ENCODE measurements at regions of chr17 and their contacts with region 1.

Region 1: GRCh38 chr17:6120351-6120750 is 50.2 kb downstream of the WSCD1 start:
- DNase-seq: no peak
- H3K4me3 ChIP-seq: no peak overlapping the region
- H3K27ac ChIP-seq: no peak overlapping the region
- H3K4me1 ChIP-seq: no peaks in the 10 kb centered on the region
- H3K27me3 ChIP-seq: no peaks in the 10 kb centered on the region
- CTCF ChIP-seq: no peak

Region 2: GRCh38 chr17:6069539-6070429 is 50.6 kb before region 1 on chr17 and contains the start of gene WSCD1:
- CTCF ChIA-PET with region 1: no interaction called
- dilution Hi-C with region 1: loop called (anchors 5 kb)
- in situ Hi-C with region 1: no loop called
- intact Hi-C with region 1: no loop called
- DNase-seq: no peak
- H3K4me3 ChIP-seq: no peak within 1 kb of the TSS
- H3K27ac ChIP-seq: no peak within 1 kb of the TSS
- H3K4me1 ChIP-seq: no peaks in the 10 kb centered on the region
- H3K27me3 ChIP-seq: peaks cover 18% of the 10 kb centered on the region
- CTCF ChIP-seq: no peak
- total RNA-seq, gene WSCD1: not detected

Region 3: GRCh38 chr17:6191405-6192324 is 71.3 kb after region 1 on chr17:
- CTCF ChIA-PET with region 1: no interaction called
- dilution Hi-C with region 1: loop called (anchors 5 kb)
- in situ Hi-C with region 1: no loop called
- intact Hi-C with region 1: no loop called
- DNase-seq: no peak
- H3K4me3 ChIP-seq: no peak overlapping the region
- H3K27ac ChIP-seq: no peak overlapping the region
- H3K4me1 ChIP-seq: no peaks in the 10 kb centered on the region
- H3K27me3 ChIP-seq: no peaks in the 10 kb centered on the region
- CTCF ChIP-seq: no peak